ENCODE measurements at regions of chr7 and their contacts with region 1.

Region 1: DNA sequence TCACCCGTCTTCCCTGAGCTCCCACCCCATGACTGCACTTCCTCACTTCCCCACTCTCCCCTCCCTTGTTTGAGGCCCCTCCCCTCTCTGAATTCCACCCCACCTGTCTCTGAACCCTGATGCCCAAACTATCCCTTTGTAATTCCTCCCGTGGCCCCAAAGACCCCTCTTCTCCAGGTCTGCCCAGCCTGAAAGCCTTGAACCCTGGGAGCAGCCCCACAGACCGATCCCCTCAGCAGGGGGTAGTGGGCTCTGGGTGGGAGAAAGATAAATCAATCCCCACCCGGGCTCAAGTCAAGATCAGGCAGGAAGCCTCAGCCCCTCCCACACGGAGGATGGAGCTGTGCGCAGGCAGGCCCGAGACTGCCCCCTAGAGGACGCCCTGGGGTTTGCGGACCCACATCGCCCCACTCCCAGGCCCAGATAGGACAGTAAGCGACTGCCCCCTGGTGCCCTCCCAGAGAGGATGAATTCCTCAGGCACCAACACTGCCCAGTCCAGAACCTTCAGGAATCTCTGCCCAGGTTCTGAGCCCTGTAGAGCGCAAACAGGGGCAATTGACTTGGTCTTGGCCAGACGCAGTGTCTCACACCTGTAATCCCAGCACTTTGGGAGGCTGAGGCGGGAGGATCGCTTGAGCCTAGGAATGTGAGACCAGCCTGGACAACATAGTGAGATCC is 11.7 kb downstream of the HSPB1 start:
- DNase-seq: peak; percentile 92
- ATAC-seq: peak; percentile 54
- H3K4me3 ChIP-seq: no peak overlapping the region
- H3K4me3 Mint-ChIP-seq: no peak overlapping the region
- H3K27ac ChIP-seq: no peak overlapping the region
- H3K27ac Mint-ChIP-seq: peak overlapping the region; percentile 15
- H3K4me1 ChIP-seq: peaks cover 5 to 20% of the 10 kb centered on the region in 2 donors
- H3K4me1 Mint-ChIP-seq: peaks cover 20% of the 10 kb centered on the region
- H3K27me3 ChIP-seq: no peaks in the 10 kb centered on the region
- H3K27me3 Mint-ChIP-seq: no peaks in the 10 kb centered on the region
- CTCF ChIP-seq: peak; percentile 97

Region 2: DNA sequence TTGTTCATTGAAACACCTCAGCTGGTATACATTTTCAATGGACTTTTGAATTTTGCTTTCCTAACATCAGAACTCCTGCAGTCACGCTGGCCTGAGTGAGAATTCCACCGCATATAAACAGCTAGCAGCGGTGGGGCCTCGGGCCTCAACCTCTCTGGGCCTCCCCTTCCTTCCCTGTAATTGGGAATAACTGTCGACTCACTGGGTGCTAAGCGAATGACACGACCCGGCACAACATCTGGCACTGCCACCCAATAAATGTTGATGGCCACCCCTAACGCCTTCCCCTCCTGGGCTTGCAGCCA is 1241.3 kb before region 1 on chr7:
- CTCF ChIA-PET with region 1: no interaction called
- POLR2A ChIA-PET with region 1: no interaction called
- intact Hi-C with region 1: loop called (anchors 10 kb)
- DNase-seq: no peak
- ATAC-seq: no peak
- H3K4me3 ChIP-seq: peak overlapping the region; percentile 21 to 79 (median 70)
- H3K4me3 Mint-ChIP-seq: peak overlapping the region; percentile 98
- H3K27ac ChIP-seq: peak overlapping the region; percentile 43 to 90
- H3K27ac Mint-ChIP-seq: peak overlapping the region; percentile 89
- H3K4me1 ChIP-seq: peaks cover 5 to 12% of the 10 kb centered on the region in 2 donors
- H3K4me1 Mint-ChIP-seq: peaks cover 12% of the 10 kb centered on the region
- H3K27me3 ChIP-seq: no peaks in the 10 kb centered on the region
- H3K27me3 Mint-ChIP-seq: no peaks in the 10 kb centered on the region
- CTCF ChIP-seq: no peak

Region 3: GRCh38 chr7:76262683-76263402 is 51.3 kb before region 1 on chr7:
- CTCF ChIA-PET with region 1: interaction called, 10 read pairs
- POLR2A ChIA-PET with region 1: no interaction called
- intact Hi-C with region 1: loop called (anchors 1 kb)
- DNase-seq: peak; percentile 46
- ATAC-seq: no peak
- H3K4me3 ChIP-seq: no peak overlapping the region
- H3K4me3 Mint-ChIP-seq: no peak overlapping the region
- H3K27ac ChIP-seq: no peak overlapping the region
- H3K27ac Mint-ChIP-seq: no peak overlapping the region
- H3K4me1 ChIP-seq: peaks cover 14 to 15% of the 10 kb centered on the region in 2 donors
- H3K4me1 Mint-ChIP-seq: peaks cover 8% of the 10 kb centered on the region
- H3K27me3 ChIP-seq: peaks cover 0 to 52% (median 16%) of the 10 kb centered on the region in 4 experiments
- H3K27me3 Mint-ChIP-seq: peaks cover 25% of the 10 kb centered on the region
- CTCF ChIP-seq: peak; percentile 73

Region 4: GRCh38 chr7:76291343-76292212 is 22.6 kb before region 1 on chr7:
- CTCF ChIA-PET with region 1: interaction called, 119 read pairs
- POLR2A ChIA-PET with region 1: interaction called, 5 read pairs
- intact Hi-C with region 1: loop called (anchors 1 kb)
- DNase-seq: peak; percentile 85
- ATAC-seq: peak; percentile 77
- H3K4me3 ChIP-seq: no peak overlapping the region
- H3K4me3 Mint-ChIP-seq: no peak overlapping the region
- H3K27ac ChIP-seq: no peak overlapping the region
- H3K27ac Mint-ChIP-seq: no peak overlapping the region
- H3K4me1 ChIP-seq: peaks cover 0 to 16% of the 10 kb centered on the region in 2 donors
- H3K4me1 Mint-ChIP-seq: peaks cover 11% of the 10 kb centered on the region
- H3K27me3 ChIP-seq: peaks cover 0 to 12% (median 2%) of the 10 kb centered on the region in 4 experiments
- H3K27me3 Mint-ChIP-seq: peaks cover 10% of the 10 kb centered on the region
- CTCF ChIP-seq: peak; percentile 98

Region 5: DNA sequence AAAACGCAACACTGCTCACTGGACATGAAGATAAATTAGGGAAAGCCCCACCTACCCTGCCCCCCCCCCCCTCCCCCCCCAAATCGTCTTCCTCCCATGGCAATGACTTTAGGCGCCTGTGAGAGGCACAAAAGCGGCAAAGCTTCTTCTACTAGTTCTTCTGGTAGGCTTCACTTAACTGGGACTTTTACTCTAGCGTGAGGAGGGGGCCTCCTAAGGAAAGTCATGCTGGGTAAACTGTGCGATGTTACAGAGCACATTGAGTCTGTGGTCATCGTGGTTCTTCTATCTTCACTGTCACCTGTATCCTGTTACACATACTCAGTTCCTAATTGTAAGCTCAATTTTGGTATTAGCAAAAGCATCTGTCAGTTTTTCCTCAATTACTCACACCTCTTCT is 13.4 kb after region 1 on chr7:
- CTCF ChIA-PET with region 1: interaction called, 11 read pairs
- POLR2A ChIA-PET with region 1: no interaction called
- intact Hi-C with region 1: no loop called
- DNase-seq: peak; percentile 34
- ATAC-seq: no peak
- H3K4me3 ChIP-seq: no peak overlapping the region
- H3K4me3 Mint-ChIP-seq: no peak overlapping the region
- H3K27ac ChIP-seq: peak overlapping the region in 1 of 2 donors; percentile 12
- H3K27ac Mint-ChIP-seq: peak overlapping the region; percentile 37
- H3K4me1 ChIP-seq: peaks cover 11 to 13% of the 10 kb centered on the region in 2 donors
- H3K4me1 Mint-ChIP-seq: peaks cover 33% of the 10 kb centered on the region
- H3K27me3 ChIP-seq: no peaks in the 10 kb centered on the region
- H3K27me3 Mint-ChIP-seq: no peaks in the 10 kb centered on the region
- CTCF ChIP-seq: no peak

Region 6: DNA sequence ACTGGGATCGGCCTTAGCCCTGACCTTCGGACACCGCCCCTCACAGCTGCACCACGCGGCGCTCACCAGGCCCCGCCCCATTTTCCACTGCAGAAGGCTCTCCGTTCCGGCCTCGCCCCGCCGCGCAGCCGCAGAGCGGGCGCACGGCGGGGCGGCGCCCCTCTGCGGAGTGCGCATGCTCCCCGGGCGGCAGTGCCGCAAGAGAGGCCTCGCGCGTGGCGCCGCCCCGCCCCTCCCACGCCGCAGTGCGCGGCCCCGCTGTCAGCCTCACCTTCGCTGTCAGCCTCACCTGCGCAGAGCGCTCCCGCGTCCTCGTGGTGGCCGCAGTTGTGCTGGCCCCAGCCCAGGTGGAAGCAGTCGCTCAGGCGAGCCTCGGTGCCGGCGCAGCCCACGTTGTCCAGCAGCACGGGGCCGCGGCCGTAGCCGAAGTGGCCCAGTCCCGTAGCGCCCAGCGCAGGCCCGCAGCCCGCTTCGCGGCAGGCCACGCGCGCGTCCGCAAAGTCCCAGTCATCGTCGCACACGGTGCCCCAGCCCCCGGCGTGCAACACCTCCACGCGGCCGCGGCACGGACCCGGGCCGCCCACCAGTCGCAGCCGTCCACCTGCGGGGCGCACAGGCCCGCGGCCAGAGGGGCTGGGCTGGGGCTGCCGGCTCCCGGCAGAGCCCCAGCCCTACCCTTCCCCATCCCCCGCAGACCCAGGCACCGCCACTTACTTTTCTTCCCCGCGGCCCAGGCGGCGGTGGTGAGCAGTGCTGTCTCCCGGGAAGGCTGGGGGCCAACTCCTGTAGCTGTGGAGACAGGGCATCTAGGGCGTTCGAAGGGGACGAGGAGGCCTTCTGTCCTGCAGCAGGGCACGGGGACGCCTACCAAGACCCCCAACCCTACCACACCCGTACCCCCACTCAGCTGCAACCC is 79.2 kb after region 1 on chr7:
- CTCF ChIA-PET with region 1: interaction called, 4 read pairs
- POLR2A ChIA-PET with region 1: no interaction called
- intact Hi-C with region 1: loop called (anchors 1 kb)
- DNase-seq: peak; percentile 94
- ATAC-seq: peak; percentile 86
- H3K4me3 ChIP-seq: peak overlapping the region; percentile 5 to 80 (median 65)
- H3K4me3 Mint-ChIP-seq: peak overlapping the region; percentile 91
- H3K27ac ChIP-seq: peak overlapping the region; percentile 37 to 53
- H3K27ac Mint-ChIP-seq: peak overlapping the region; percentile 98
- H3K4me1 ChIP-seq: peaks cover 18 to 32% of the 10 kb centered on the region in 2 donors
- H3K4me1 Mint-ChIP-seq: peaks cover 24% of the 10 kb centered on the region
- H3K27me3 ChIP-seq: no peaks in the 10 kb centered on the region
- H3K27me3 Mint-ChIP-seq: no peaks in the 10 kb centered on the region
- CTCF ChIP-seq: no peak

Region 7: GRCh38 chr7:76403780-76404494 is 89.8 kb after region 1 on chr7:
- CTCF ChIA-PET with region 1: no interaction called
- POLR2A ChIA-PET with region 1: no interaction called
- intact Hi-C with region 1: no loop called
- DNase-seq: peak; percentile 32
- ATAC-seq: no peak
- H3K4me3 ChIP-seq: no peak overlapping the region
- H3K4me3 Mint-ChIP-seq: no peak overlapping the region
- H3K27ac ChIP-seq: no peak overlapping the region
- H3K27ac Mint-ChIP-seq: no peak overlapping the region
- H3K4me1 ChIP-seq: peaks cover 6 to 7% of the 10 kb centered on the region in 2 donors
- H3K4me1 Mint-ChIP-seq: peaks cover 10% of the 10 kb centered on the region
- H3K27me3 ChIP-seq: no peaks in the 10 kb centered on the region
- H3K27me3 Mint-ChIP-seq: no peaks in the 10 kb centered on the region
- CTCF ChIP-seq: no peak